ENCODE measurements at regions of chr2 and their contacts with region 1.

Region 1: GRCh38 chr2:196289000-196289399 is 117.6 kb upstream of the STK17B start:
- DNase-seq: no peak
- H3K4me3 ChIP-seq: no peak overlapping the region
- H3K27ac ChIP-seq: no peak overlapping the region
- H3K4me1 ChIP-seq: peaks cover 0 to 12% (median 5%) of the 10 kb centered on the region in 4 donors
- H3K27me3 ChIP-seq: no peaks in the 10 kb centered on the region
- CTCF ChIP-seq: no peak
- EP300 ChIP-seq: no peak
- POLR2A ChIP-seq: no peak

Region 2: GRCh38 chr2:196088203-196088602 is 200.8 kb before region 1 on chr2:
- intact Hi-C with region 1: loop called (anchors 10 kb)
- DNase-seq: peak in 1 of 2 donors; percentile 39
- H3K4me3 ChIP-seq: no peak overlapping the region
- H3K27ac ChIP-seq: no peak overlapping the region
- H3K4me1 ChIP-seq: no peaks in the 10 kb centered on the region
- H3K27me3 ChIP-seq: no peaks in the 10 kb centered on the region
- CTCF ChIP-seq: no peak
- EP300 ChIP-seq: no peak
- POLR2A ChIP-seq: no peak

Region 3: DNA sequence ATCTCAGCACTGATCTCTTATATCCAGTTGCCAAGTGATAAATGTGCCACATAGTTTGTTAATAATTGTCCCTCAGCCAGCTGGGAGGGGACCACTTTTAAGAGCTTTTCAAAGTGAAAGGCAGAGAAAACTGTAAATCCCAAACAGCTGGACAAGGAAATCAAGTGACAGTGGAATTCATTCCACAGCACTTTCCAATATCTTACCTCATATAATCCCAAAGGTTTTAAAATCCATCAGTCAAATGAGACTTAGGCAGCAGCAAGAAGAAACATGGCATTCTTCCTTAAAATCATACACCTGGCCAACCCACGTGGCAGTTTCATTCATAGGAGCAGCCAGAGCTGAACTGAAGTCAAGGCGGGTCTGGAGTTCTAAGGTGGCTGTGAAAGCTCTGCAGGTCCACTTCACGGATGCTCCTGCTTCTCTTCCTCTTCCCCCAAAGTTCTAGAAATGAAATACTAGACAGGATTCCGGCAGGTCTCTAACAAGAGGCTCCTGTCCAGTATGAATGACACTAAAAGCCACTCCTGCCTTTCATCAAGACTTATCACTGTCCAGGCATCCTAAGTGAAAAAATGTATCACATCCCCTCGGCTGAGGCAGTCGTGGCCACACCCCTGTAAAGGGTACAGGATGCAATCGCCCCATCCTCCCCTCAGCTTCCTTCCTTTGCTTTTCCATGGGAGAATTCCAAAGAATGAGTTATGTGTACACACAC is 72.8 kb after region 1 on chr2:
- intact Hi-C with region 1: no loop called
- DNase-seq: peak in 1 of 2 donors; percentile 25
- H3K4me3 ChIP-seq: no peak overlapping the region
- H3K27ac ChIP-seq: no peak overlapping the region
- H3K4me1 ChIP-seq: no peaks in the 10 kb centered on the region
- H3K27me3 ChIP-seq: no peaks in the 10 kb centered on the region
- CTCF ChIP-seq: no peak
- EP300 ChIP-seq: no peak
- POLR2A ChIP-seq: no peak

Region 4: GRCh38 chr2:196376984-196377877 is 88.2 kb after region 1 on chr2:
- intact Hi-C with region 1: no loop called
- DNase-seq: no peak
- H3K4me3 ChIP-seq: no peak overlapping the region
- H3K27ac ChIP-seq: no peak overlapping the region
- H3K4me1 ChIP-seq: no peaks in the 10 kb centered on the region
- H3K27me3 ChIP-seq: no peaks in the 10 kb centered on the region
- CTCF ChIP-seq: no peak
- EP300 ChIP-seq: no peak
- POLR2A ChIP-seq: no peak

Region 5: DNA sequence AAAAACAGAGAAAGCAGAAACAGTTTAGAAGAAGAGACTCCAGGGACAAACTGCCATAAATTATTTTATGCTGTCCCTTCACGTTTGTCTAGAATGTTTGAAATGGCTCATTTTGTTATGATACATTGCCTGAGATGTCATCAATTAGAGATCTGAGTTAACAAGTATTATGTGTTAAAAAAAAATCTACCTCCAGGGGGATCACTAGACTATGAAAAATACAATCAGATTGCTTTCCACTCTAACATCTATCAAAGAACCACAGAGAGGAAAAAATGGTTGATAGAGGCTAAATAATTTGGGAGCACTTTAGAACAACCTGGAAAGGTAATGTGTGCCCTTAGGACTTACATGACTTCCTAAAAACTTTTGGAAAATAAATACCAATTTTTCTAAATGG is 246.7 kb after region 1 on chr2:
- intact Hi-C with region 1: no loop called
- DNase-seq: no peak
- H3K4me3 ChIP-seq: no peak overlapping the region
- H3K27ac ChIP-seq: no peak overlapping the region
- H3K4me1 ChIP-seq: no peaks in the 10 kb centered on the region
- H3K27me3 ChIP-seq: no peaks in the 10 kb centered on the region
- CTCF ChIP-seq: no peak
- EP300 ChIP-seq: no peak
- POLR2A ChIP-seq: no peak

Measured in stomach (tissue), 19 donors.